Colonic mucosa (tissue), 4 donors: ENCODE measurements at regions of chr5 and their contacts with region 1.

Region 1: GRCh38 chr5:139513852-139514485 is 31.4 kb upstream of the STING1 start:
- DNase-seq: no peak
- H3K4me3 ChIP-seq: no peak overlapping the region
- H3K27ac ChIP-seq: no peak overlapping the region
- H3K4me1 ChIP-seq: no peaks in the 10 kb centered on the region
- H3K27me3 ChIP-seq: no peaks in the 10 kb centered on the region
- CTCF ChIP-seq: peak; percentile 13

Region 2: DNA sequence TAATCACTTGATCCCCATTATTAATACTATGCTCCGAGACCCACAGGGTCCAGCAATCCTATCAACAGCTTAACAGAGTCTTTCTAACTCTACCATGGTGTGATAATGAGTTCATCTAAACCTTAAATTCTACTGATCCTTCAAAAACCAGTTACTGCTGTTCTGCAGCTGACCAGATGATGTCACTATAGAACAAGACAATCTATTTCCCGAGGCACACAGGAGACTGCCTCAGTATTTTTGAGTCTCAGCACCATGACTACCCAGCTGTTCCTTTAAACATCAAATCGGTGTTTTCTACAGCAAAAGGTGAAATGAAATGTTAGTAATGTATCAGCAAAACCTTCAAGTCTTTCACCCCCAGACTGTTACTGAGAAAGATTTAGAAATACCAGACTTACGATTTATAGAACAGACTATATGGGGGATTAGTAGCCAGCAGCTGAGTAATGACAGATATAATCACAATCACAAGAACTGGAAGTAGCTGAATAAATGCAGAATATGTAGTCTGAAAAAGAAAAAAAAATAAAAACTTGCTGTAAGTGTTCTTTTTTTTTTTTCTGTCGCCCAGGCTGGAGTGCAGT is 91.6 kb before region 1 on chr5:
- intact Hi-C with region 1: loop called (anchors 1 kb)
- DNase-seq: peak; percentile 70
- H3K4me3 ChIP-seq: no peak overlapping the region
- H3K27ac ChIP-seq: no peak overlapping the region
- H3K4me1 ChIP-seq: peaks cover 5% of the 10 kb centered on the region
- H3K27me3 ChIP-seq: no peaks in the 10 kb centered on the region
- CTCF ChIP-seq: peak; percentile 85